ENCODE measurements at regions of chr5 and their contacts with region 1.

Region 1: GRCh38 chr5:114449860-114450421 is 88.1 kb downstream of the KCNN2 start:
- DNase-seq: peak; percentile 68 to 87 (median 79)
- H3K4me3 ChIP-seq: peak overlapping the region in 47 of 59 donors; percentile 2 to 55 (median 30)
- H3K27ac ChIP-seq: peak overlapping the region in 32 of 59 donors; percentile 3 to 72 (median 38)
- H3K27me3 ChIP-seq: no peaks in the 10 kb centered on the region
- CTCF ChIP-seq: peak; percentile 70 to 96 (median 86)

Region 2: DNA sequence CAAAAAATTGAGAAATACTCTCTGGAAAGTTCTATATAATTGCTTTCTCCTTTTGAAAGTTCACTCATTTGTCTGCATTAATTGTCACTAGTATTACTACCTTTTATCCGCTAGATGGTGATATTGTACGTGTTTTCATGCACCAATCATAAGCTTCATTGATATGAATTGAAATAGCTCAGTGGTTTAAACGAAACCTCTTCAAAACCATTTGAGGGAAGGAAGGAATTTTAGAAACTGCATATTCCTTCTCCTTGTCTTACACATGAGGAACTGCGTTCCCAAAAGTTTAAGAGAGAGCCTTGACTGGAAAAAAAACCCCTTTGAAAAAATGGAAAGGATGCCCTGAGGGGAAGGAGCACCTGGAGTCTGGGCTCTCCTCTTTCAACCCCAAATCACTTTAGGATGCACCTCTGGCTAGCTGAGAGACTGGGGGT is 837.9 kb before region 1 on chr5:
- intact Hi-C with region 1: loop called in 1 of 2 experiments (anchors 10 kb)
- DNase-seq: no peak
- H3K4me3 ChIP-seq: no peak overlapping the region
- H3K27ac ChIP-seq: no peak overlapping the region
- H3K27me3 ChIP-seq: peaks cover 0 to 3% (median 0%) of the 10 kb centered on the region in 45 donors
- CTCF ChIP-seq: peak; percentile 53 to 86 (median 71)

Region 3: GRCh38 chr5:113678924-113679575 is 770.9 kb before region 1 on chr5:
- intact Hi-C with region 1: loop called (anchors 5 to 10 kb)
- DNase-seq: peak in 5 of 10 donors; percentile 36 to 45 (median 41)
- H3K4me3 ChIP-seq: no peak overlapping the region
- H3K27ac ChIP-seq: no peak overlapping the region
- H3K27me3 ChIP-seq: no peaks in the 10 kb centered on the region
- CTCF ChIP-seq: peak; percentile 46 to 89 (median 76)

Region 4: GRCh38 chr5:114018186-114018585 is 431.8 kb before region 1 on chr5:
- intact Hi-C with region 1: loop called (anchors 5 to 10 kb)
- DNase-seq: no peak
- H3K4me3 ChIP-seq: no peak overlapping the region
- H3K27ac ChIP-seq: no peak overlapping the region
- H3K27me3 ChIP-seq: peaks cover 0 to 5% (median 0%) of the 10 kb centered on the region in 45 donors
- CTCF ChIP-seq: peak in 53 of 56 donors; percentile 37 to 75 (median 58)

Region 5: DNA sequence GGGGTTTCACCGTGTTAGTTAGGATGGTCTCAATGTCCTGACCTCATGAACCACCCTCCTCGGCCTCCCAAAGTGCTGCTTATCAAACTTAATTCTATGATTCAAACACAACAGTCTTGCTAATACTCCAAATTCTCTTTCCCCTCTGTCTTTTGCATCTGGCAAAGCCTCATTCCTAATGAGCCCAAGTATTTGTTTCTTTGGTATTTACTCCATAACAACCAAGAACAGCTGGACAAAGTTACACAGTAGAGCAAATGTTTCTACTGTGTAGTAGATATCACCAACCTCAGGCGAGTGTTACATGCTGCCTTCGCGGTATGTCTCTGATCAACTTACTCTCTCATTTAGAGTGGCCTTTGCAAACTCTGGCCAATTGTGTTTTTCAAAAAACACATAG is 283.9 kb before region 1 on chr5:
- intact Hi-C with region 1: no loop called
- DNase-seq: no peak
- H3K4me3 ChIP-seq: no peak overlapping the region
- H3K27ac ChIP-seq: no peak overlapping the region
- H3K27me3 ChIP-seq: no peaks in the 10 kb centered on the region
- CTCF ChIP-seq: no peak

Region 6: GRCh38 chr5:114361724-114362196 is 88.2 kb before region 1 on chr5 and contains the start of gene KCNN2:
- intact Hi-C with region 1: loop called (anchors 2 to 5 kb)
- DNase-seq: peak; percentile 80 to 94 (median 92)
- H3K4me3 ChIP-seq: peak within 1 kb of the TSS; percentile 63 to 93 (median 80)
- H3K27ac ChIP-seq: peak within 1 kb of the TSS in 57 of 59 donors; percentile 4 to 93 (median 78)
- H3K27me3 ChIP-seq: peaks cover 0 to 14% (median 0%) of the 10 kb centered on the region in 45 donors
- CTCF ChIP-seq: peak in 5 of 56 donors; percentile 6 to 21 (median 12)
- total RNA-seq, gene KCNN2: 12.0 to 45.6 (median 28.9) TPM

Region 7: DNA sequence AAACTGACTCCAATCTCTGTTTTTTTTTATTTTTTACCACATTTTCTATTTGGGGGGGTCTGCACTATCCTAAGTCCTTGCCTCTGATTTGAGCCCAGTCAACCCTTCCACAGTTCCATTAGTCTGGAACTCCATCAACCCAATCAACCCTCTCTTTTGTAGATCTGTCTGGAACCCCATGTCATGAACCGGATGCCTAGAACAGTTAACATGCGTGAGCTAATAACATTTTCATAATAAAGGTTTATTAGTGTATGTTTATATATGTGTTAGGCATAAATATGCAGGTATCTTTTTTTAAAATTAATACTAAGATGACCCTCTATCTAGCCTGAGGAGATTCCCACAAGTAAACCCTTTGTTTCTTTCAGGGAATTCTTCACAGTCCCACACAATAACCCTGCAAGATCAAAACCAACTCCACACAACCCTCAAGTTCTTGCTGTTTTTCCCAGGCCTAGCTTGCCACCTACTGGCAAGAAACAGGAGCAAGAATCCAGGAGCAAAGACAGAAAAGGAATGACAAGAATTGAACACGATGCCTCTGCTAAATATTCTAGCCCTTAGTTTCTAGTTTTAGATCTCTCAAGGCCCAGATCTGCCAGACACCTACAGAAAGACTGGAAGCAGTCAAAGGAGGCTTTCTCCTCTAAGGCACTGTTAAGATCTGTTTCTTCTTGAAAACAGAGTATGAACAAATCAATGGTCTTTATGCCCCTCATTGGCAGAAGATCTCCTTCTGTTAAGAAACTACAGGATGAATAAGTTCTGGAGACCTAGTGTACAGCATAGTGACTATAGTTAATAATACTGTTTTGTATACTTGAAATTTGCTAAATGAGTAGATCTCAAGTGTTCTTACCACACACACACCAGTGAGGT is 619.4 kb after region 1 on chr5:
- intact Hi-C with region 1: loop called in 1 of 2 experiments (anchors 10 kb)
- DNase-seq: peak in 8 of 10 donors; percentile 26 to 66 (median 44)
- H3K4me3 ChIP-seq: no peak overlapping the region
- H3K27ac ChIP-seq: no peak overlapping the region
- H3K27me3 ChIP-seq: peaks cover 0 to 8% (median 0%) of the 10 kb centered on the region in 45 donors
- CTCF ChIP-seq: peak; percentile 50 to 89 (median 74)

Measured in dorsolateral prefrontal cortex (tissue), 120 donors.